Mammary epithelial cell (primary cell): ENCODE measurements at regions of chr17 and their contacts with region 1.

Region 1: GRCh38 chr17:409848-410545 is 57.4 kb upstream of the RPH3AL start:
- DNase-seq: peak; percentile 97
- H3K4me3 ChIP-seq: peak overlapping the region; percentile 65 to 67 (median 66)
- H3K27ac ChIP-seq: peak overlapping the region; percentile 66
- H3K4me1 ChIP-seq: peaks cover 6% of the 10 kb centered on the region
- H3K27me3 ChIP-seq: no peaks in the 10 kb centered on the region
- CTCF ChIP-seq: no peak

Region 2: DNA sequence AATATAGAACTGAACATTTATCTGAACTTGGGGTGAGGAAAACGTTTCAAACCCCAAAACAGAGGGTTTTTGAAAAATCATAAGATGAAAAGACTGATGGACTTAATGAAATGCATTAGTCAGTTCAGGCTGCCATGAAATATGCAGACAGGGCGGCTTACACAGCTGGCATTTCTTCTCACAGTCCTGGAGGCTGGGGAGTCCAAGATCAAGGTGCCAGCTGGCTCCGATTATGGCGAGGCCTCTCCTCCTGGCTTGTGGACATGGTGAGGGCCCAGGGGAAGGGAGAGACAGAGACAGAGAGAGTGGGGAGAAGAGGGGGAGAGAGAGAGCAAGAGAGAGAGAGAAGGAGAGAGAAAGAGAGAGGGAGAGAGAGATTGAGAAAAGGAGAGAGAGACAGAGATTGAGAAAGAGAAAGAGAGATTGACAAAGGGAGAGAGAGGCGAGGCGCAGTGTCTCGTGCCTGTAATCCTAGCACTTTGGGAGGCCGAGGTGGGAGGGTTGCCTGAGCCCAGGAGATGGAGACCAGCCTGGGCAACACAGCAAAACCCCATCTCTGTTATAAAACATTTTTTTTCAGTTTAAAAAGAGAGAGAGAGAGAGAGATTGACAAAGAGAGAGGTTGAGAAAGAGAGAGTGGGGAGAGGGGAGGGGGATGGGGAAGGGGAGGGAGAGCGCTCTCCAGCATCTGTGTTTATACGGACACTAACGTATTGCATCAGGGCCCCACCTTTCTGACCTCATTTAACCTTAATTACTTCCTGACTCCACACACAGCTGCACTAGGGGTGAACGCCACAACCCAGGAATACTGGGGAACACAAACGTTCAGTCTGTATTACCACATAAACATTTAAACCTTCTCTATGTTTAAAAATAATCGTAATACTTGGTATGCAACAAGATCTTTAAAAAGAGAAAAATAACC is 32.8 kb before region 1 on chr17:
- CTCF ChIA-PET with region 1: no interaction called
- dilution Hi-C with region 1: no loop called
- in situ Hi-C with region 1: no loop called
- intact Hi-C with region 1: no loop called
- DNase-seq: no peak
- H3K4me3 ChIP-seq: no peak overlapping the region
- H3K27ac ChIP-seq: no peak overlapping the region
- H3K4me1 ChIP-seq: no peaks in the 10 kb centered on the region
- H3K27me3 ChIP-seq: no peaks in the 10 kb centered on the region
- CTCF ChIP-seq: no peak

Region 3: GRCh38 chr17:393806-394717 is 15.9 kb before region 1 on chr17:
- CTCF ChIA-PET with region 1: no interaction called
- dilution Hi-C with region 1: no loop called
- in situ Hi-C with region 1: no loop called
- intact Hi-C with region 1: no loop called
- DNase-seq: no peak
- H3K4me3 ChIP-seq: no peak overlapping the region
- H3K27ac ChIP-seq: no peak overlapping the region
- H3K4me1 ChIP-seq: peaks cover 12% of the 10 kb centered on the region
- H3K27me3 ChIP-seq: no peaks in the 10 kb centered on the region
- CTCF ChIP-seq: no peak

Region 4: DNA sequence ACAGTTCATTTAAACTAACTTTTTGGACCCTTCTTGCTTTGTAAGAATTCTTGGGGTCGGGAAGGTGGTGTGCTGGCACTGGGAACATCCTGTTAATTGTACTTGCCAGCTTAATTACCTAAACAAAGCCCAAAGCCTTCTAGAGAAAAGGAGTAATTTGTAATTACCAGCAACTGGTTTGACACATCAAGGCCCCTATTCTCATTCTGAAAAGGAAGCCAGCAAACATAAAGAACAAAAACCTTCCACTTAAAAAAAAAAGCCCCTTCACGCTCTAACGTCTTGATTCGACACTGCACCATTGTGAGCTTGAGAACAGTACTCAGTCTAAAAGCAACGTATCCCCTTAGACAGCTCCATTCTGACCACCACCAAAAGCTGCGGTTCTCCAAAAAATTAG is 17.3 kb after region 1 on chr17:
- CTCF ChIA-PET with region 1: no interaction called
- dilution Hi-C with region 1: no loop called
- in situ Hi-C with region 1: no loop called
- intact Hi-C with region 1: no loop called
- DNase-seq: no peak
- H3K4me3 ChIP-seq: no peak overlapping the region
- H3K27ac ChIP-seq: no peak overlapping the region
- H3K4me1 ChIP-seq: no peaks in the 10 kb centered on the region
- H3K27me3 ChIP-seq: no peaks in the 10 kb centered on the region
- CTCF ChIP-seq: no peak

Region 5: DNA sequence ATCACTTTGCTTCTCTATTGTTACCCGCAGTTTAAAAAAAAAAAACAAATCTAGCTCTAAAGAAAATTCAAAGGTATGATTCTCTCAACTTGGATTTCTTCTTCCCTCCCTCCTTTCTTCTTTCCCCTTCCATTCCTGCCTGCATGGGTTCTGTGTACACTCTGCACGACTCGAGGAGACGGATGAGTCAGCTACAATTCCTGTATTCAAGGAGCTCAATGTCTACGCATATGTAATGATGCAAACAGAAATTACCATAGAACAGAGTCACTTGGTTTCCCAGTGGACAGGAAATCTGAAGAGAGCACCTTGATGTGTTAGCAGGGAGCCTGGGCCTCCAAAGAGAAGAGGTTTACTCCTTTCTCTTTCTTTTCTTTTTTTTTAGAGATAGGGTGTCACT is 212.4 kb after region 1 on chr17:
- CTCF ChIA-PET with region 1: interaction called, 17 read pairs
- dilution Hi-C with region 1: no loop called
- in situ Hi-C with region 1: no loop called
- intact Hi-C with region 1: loop called (anchors 1 kb)
- DNase-seq: peak; percentile 57
- H3K4me3 ChIP-seq: no peak overlapping the region
- H3K27ac ChIP-seq: no peak overlapping the region
- H3K4me1 ChIP-seq: peaks cover 15% of the 10 kb centered on the region
- H3K27me3 ChIP-seq: no peaks in the 10 kb centered on the region
- CTCF ChIP-seq: no peak

Region 6: DNA sequence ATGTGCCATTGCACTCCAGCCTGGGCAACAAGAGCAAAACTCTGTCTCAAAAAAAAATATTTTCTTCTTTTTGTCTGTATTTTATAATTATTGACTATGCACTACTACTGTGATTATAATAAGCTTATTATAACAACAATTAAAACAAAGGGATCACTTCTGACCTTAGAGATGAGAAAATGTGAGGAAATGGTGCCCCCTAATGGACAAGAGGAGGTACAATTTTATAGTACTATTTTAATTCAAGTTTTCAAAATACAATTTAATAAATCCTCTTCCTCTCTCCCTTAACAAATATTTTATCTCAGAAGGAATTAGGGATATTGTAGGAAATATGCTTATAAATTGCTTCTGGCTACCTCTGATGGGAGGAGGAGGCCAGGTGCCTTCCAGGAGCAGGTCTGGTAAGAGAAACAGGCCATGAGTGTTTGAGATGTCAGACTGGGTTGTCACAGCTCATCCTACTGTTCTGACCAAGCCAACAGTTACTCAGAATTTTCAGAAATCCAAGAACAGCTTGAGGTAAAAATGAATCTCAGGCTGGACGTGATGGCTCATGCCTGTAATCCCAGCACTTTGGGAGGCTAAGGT is 290.6 kb after region 1 on chr17:
- CTCF ChIA-PET with region 1: interaction called, 32 read pairs
- dilution Hi-C with region 1: no loop called
- in situ Hi-C with region 1: no loop called
- intact Hi-C with region 1: loop called (anchors 1 kb)
- DNase-seq: no peak
- H3K4me3 ChIP-seq: no peak overlapping the region
- H3K27ac ChIP-seq: no peak overlapping the region
- H3K4me1 ChIP-seq: no peaks in the 10 kb centered on the region
- H3K27me3 ChIP-seq: no peaks in the 10 kb centered on the region
- CTCF ChIP-seq: peak; percentile 46 to 56

Region 7: DNA sequence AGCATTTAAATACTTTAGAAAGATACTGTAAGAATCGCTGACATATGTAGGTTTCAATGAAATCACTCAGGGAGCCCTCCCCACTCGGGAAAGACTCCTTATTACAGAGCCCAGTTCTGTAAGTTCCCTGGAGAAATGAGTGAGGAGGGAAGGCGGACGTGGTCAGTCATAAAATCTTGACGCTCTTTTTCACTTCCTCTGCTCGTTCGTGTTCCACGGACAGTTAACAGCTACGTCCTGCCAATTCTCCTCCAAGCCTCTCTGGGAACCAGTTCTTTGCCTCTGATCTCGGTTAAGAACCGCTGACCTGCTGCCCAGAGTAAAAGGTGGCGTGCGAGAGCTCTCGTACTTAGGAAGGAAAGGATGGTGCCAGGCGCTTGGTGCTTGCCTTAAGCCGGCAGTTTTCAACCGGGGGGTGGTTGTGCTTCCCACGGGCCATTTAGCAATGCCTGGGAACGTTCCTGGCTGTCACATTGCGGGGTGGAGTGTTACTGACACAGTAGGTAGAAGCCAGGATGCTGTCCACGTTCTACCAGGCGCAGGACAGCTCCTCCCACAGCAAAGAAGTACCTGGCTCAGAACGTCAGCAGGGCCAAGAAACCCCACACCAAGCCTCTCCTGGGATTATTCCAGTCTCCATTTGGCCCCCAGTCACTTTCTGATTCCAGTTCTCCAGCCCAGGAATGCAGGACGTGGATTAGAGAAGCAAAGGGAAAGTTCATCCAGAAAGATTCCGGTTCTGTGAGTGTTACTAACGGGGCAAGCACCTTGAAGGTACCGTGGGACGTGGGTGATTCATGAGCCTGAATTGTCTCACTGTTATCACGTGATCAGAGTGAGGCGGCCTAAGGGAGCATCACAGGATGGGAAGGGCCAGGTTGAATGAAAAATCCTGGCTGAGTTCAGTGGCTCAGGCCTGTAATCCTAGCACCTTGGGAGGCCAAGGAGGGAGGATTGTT is 459.8 kb after region 1 on chr17:
- CTCF ChIA-PET with region 1: no interaction called
- dilution Hi-C with region 1: no loop called
- in situ Hi-C with region 1: no loop called
- intact Hi-C with region 1: loop called (anchors 5 kb)
- DNase-seq: peak; percentile 96
- H3K4me3 ChIP-seq: peak overlapping the region; percentile 14 to 36 (median 30)
- H3K27ac ChIP-seq: peak overlapping the region; percentile 89
- H3K4me1 ChIP-seq: peaks cover 17% of the 10 kb centered on the region
- H3K27me3 ChIP-seq: no peaks in the 10 kb centered on the region
- CTCF ChIP-seq: peak in 1 of 2 donors; percentile 8